Left ventricle myocardium superior (tissue), 1 donor: ENCODE measurements at regions of chr20 and their contacts with region 1.

Region 1: DNA sequence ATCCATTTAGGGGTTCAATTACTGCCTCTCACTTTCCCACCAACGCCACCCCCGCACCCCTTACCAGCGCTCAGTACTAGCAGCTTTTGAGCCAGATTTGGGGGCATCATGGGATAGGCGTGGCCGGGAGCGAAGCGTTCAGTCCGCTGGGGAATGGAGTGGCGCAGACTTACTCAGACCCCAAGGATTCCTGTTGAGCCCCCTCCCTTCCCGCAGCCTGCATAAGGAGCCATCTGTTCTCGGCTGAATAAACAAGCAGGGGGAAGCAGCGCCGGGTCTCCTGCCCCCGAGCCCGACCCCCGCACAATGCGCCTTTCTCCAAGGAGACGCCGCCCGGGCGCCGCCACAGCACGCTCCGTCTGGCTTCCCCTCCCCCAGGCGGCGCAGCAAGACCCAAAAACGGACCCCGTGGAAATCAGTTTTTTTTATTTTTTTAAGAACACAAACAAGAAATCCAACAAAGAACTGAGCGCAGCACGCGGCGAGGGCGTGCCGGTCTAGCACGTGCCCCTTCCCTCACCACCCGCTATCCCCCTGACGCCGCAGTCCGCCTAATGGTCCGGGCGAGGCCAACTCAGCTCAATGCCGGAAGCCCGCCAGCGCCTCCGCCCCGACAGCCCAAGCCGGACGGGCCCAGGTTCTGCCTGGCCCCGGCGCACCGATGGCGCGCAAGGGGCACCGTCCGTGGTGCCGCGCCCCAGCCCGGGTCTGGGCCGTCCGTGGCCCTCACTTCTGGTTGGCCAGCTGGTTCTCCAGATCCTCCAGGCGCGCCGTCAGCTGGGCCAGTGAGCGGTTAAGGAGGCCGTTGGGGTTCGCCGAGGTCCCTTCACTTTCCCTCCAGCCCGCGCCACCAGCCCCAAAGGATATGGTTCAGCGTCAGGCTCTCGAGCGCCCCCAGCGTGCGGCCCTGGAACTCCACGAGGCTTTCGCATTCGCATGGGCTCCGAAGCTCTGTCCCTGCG is 13.3 kb upstream of the RBPJL start:
- DNase-seq: peak; percentile 87
- ATAC-seq: peak; percentile 93

Region 2: GRCh38 chr20:44990425-44990824 is 302.9 kb before region 1 on chr20:
- intact Hi-C with region 1: loop called (anchors 10 kb)
- DNase-seq: no peak
- ATAC-seq: peak; percentile 31

Region 3: GRCh38 chr20:45450097-45450818 is 156.9 kb after region 1 on chr20:
- intact Hi-C with region 1: no loop called
- DNase-seq: no peak
- ATAC-seq: peak; percentile 52